Naive thymus-derived CD8-positive, alpha-beta T cell (primary cell): ENCODE measurements at regions of chr3 and their contacts with region 1.

Region 1: DNA sequence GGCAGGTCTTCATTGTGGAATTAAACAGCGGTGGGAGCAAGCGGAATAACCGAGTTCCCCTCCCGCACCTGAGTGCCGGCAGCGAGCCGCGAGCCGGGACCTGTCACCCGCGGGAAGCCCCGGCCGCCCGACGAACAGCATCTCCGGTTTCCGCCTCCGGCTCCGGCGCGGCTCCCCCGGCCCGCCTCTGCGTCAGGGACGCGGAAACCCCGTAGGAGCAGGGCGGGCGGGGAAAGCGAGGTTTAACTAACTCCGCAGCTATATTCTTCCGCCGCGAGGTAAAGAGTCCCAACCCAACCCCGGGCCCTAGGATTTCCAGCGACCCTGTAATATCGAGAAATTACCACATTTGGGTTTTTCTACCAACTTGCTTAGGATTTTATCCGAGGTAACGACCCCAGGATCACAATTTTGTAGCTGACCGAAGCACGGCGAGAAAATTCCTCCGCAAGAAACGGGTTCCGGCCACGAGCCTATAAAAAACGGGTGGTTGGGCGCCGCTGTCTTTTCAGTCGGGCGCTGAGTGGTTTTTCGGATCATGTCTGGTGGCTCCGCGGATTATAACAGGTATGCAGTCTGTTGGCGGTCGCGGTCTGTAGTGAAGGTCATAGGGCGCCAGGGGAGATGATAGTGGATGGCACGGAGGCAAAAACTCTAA is at the start of gene EIF4A2:
- DNase-seq: peak; percentile 84 to 97 (median 88)
- ATAC-seq: peak; percentile 69 to 70
- H3K4me3 Mint-ChIP-seq: peak within 1 kb of the TSS; percentile 98 to 100 (median 99)
- H3K27ac Mint-ChIP-seq: peak within 1 kb of the TSS; percentile 99 to 100 (median 100)
- H3K4me1 Mint-ChIP-seq: peaks cover 27 to 55% (median 52%) of the 10 kb centered on the region in 4 donors
- H3K27me3 Mint-ChIP-seq: no peaks in the 10 kb centered on the region
- polyA plus RNA-seq, gene EIF4A2: 221 to 293 (median 226) TPM

Region 2: GRCh38 chr3:185937689-185938463 is 845.3 kb before region 1 on chr3 and contains the start of gene TRA2B:
- POLR2A ChIA-PET with region 1: interaction called, 52 read pairs
- DNase-seq: peak; percentile 92 to 99 (median 99)
- ATAC-seq: peak; percentile 84 to 88
- H3K4me3 Mint-ChIP-seq: peak within 1 kb of the TSS; percentile 96 to 100 (median 100)
- H3K27ac Mint-ChIP-seq: peak within 1 kb of the TSS; percentile 99 to 100 (median 100)
- H3K4me1 Mint-ChIP-seq: peaks cover 17 to 47% (median 38%) of the 10 kb centered on the region in 4 donors
- H3K27me3 Mint-ChIP-seq: peaks cover 0 to 2% (median 0%) of the 10 kb centered on the region in 5 donors
- polyA plus RNA-seq, gene TRA2B: 176 to 226 (median 184) TPM

Region 3: DNA sequence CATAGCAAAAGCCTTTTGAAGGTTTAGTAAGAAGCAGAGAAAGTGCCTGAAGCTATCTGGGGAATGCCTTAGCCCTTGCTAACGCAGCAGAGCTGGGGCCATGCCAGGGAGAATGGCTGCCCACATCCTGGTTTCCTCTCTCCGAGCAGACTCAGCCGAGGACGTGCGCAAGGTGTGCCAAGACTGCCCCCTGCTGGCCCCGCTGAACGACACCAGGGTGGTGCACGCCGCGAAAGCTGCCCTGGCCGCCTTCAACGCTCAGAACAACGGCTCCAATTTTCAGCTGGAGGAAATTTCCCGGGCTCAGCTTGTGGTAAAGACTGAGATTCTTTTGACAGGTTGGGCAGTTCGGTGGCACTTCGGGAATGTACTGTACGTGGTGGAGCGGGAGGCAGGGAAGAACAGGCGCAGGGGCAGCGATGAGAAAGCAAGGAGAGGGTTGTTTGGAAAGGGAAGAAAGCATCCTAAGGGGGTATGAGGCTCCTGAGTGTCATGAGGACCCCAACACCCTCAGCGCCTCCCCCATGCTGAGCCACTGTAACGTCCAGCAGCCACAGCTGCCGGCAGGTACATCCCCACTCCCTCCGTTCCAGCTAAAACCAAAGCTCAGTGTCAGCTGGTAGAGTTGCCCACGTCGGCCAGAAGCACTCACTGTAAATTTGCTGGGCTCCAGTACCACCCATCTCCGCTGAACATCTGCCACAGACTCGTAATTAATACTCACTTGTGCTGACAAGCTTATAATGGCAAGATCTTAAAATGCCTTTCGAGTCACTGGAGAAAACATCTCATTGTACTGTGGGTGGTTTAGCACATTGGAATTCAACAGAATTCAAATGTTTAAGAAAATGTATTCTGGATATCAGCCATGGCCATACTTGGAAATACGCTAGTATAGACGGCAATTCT is 165.9 kb before region 1 on chr3:
- POLR2A ChIA-PET with region 1: interaction called, 38 read pairs
- DNase-seq: peak; percentile 72 to 90 (median 82)
- ATAC-seq: peak; percentile 98
- H3K4me3 Mint-ChIP-seq: peak overlapping the region; percentile 54 to 79 (median 72)
- H3K27ac Mint-ChIP-seq: peak overlapping the region in 6 of 10 donors; percentile 47 to 87 (median 73)
- H3K4me1 Mint-ChIP-seq: peaks cover 13 to 21% (median 19%) of the 10 kb centered on the region in 4 donors
- H3K27me3 Mint-ChIP-seq: peaks cover 8 to 43% (median 26%) of the 10 kb centered on the region in 5 donors

Region 4: GRCh38 chr3:186732169-186732766 is 50.9 kb before region 1 on chr3:
- POLR2A ChIA-PET with region 1: no interaction called
- DNase-seq: no peak
- ATAC-seq: no peak
- H3K4me3 Mint-ChIP-seq: no peak overlapping the region
- H3K27ac Mint-ChIP-seq: no peak overlapping the region
- H3K4me1 Mint-ChIP-seq: no peaks in the 10 kb centered on the region
- H3K27me3 Mint-ChIP-seq: peaks cover 0 to 2% (median 0%) of the 10 kb centered on the region in 5 donors

Region 5: GRCh38 chr3:186798239-186798874 is 15.2 kb after region 1 on chr3:
- POLR2A ChIA-PET with region 1: interaction called, 97 read pairs
- DNase-seq: no peak
- ATAC-seq: no peak
- H3K4me3 Mint-ChIP-seq: no peak overlapping the region
- H3K27ac Mint-ChIP-seq: peak overlapping the region in 2 of 10 donors; percentile 27 to 50
- H3K4me1 Mint-ChIP-seq: peaks cover 0 to 15% (median 11%) of the 10 kb centered on the region in 4 donors
- H3K27me3 Mint-ChIP-seq: no peaks in the 10 kb centered on the region

Region 6: GRCh38 chr3:186826976-186827731 is 44.0 kb after region 1 on chr3:
- POLR2A ChIA-PET with region 1: interaction called, 38 read pairs
- DNase-seq: peak; percentile 76 to 91 (median 85)
- ATAC-seq: peak; percentile 89 to 92
- H3K4me3 Mint-ChIP-seq: peak overlapping the region; percentile 55 to 85 (median 76)
- H3K27ac Mint-ChIP-seq: peak overlapping the region in 1 of 10 donors; percentile 29
- H3K4me1 Mint-ChIP-seq: peaks cover 8 to 26% (median 21%) of the 10 kb centered on the region in 4 donors
- H3K27me3 Mint-ChIP-seq: peaks cover 36 to 71% (median 50%) of the 10 kb centered on the region in 5 donors

Region 7: GRCh38 chr3:186849374-186849975 is 66.3 kb after region 1 on chr3:
- POLR2A ChIA-PET with region 1: no interaction called
- DNase-seq: peak in 5 of 10 donors; percentile 13 to 77 (median 60)
- ATAC-seq: peak; percentile 99 to 100
- H3K4me3 Mint-ChIP-seq: peak overlapping the region in 1 of 10 donors; percentile 41
- H3K27ac Mint-ChIP-seq: peak overlapping the region in 6 of 10 donors; percentile 51 to 84 (median 71)
- H3K4me1 Mint-ChIP-seq: peaks cover 12 to 29% (median 19%) of the 10 kb centered on the region in 4 donors
- H3K27me3 Mint-ChIP-seq: peaks cover 0 to 6% (median 5%) of the 10 kb centered on the region in 5 donors

Region 8: DNA sequence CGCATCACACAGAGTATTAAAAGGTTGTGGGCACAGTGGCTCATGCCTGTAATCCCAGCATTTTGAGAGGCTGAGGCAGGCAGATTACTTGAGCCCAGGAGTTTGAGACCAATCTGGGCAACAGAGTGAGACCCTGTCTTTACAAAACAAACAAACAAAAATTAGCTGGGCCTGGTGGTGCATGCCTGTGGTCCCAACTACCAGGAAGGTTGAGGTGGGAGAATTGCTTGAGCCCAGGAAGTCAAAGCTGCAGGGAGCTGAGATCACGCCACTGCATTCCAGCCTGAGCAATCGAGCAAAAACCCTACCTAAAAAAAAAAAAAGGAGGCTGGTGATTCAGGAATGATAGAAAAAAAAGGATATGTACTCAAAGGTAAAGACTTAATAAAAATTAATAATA is 119.0 kb after region 1 on chr3:
- POLR2A ChIA-PET with region 1: no interaction called
- DNase-seq: no peak
- ATAC-seq: no peak
- H3K4me3 Mint-ChIP-seq: peak overlapping the region in 1 of 10 donors; percentile 10
- H3K27ac Mint-ChIP-seq: peak overlapping the region in 4 of 10 donors; percentile 48 to 72 (median 57)
- H3K4me1 Mint-ChIP-seq: peaks cover 11 to 39% (median 33%) of the 10 kb centered on the region in 4 donors
- H3K27me3 Mint-ChIP-seq: no peaks in the 10 kb centered on the region

Region 9: DNA sequence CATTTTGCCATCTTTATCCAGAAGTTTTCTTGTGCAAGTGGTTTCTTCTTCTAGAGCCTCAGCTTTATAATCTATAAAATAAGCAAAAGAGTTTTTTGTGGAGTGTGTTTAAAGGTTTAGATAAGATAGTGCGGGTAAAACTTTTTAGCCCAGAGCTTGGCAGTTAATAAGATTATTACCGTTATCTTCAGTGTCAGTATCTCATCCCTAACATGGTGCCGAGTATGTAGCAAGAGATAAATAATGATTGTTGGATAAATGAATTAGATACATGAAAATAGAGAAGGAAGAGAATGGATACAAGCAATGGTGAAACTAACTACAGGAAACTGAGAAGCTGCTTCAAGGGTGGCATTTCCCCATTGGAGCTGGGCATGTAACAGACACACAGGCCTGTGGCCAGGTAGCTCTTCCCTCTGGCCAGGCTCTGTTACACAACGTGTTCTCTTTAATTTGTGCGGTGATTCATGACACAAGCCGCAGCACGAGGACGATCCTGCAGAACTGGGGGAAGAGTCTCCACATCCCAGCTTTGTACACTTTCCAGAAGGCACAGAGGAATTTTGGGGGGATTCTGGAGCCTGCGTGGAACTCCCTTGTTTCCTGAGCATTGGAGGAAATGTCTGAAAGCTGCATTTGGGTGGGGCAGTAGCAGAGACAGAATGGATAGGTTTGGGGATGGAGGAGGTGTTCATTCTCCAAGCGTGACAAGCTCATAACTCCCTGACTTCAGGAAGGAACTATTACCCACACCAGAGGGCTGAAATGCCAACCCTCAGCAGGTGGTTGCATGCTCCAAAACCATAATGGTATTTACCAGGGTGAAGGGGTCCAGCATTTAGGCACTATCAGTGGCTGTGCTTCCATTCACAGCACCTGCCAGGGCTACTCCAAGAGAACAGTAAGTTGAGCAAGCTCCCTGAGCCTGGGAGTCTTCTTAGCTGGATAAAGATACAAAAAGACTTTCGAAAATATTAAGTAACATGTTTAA is 132.9 kb after region 1 on chr3:
- POLR2A ChIA-PET with region 1: interaction called, 19 read pairs
- DNase-seq: peak in 1 of 10 donors; percentile 6
- ATAC-seq: peak; percentile 57 to 59
- H3K4me3 Mint-ChIP-seq: peak overlapping the region in 9 of 10 donors; percentile 9 to 83 (median 58)
- H3K27ac Mint-ChIP-seq: peak overlapping the region; percentile 3 to 71 (median 48)
- H3K4me1 Mint-ChIP-seq: peaks cover 28 to 58% (median 54%) of the 10 kb centered on the region in 4 donors
- H3K27me3 Mint-ChIP-seq: no peaks in the 10 kb centered on the region

Region 10: GRCh38 chr3:187025656-187026316 is 242.6 kb after region 1 on chr3:
- POLR2A ChIA-PET with region 1: interaction called, 20 read pairs
- DNase-seq: peak in 2 of 10 donors; percentile 39 to 43
- ATAC-seq: peak; percentile 10 to 18
- H3K4me3 Mint-ChIP-seq: peak overlapping the region; percentile 85 to 95 (median 90)
- H3K27ac Mint-ChIP-seq: peak overlapping the region; percentile 88 to 99 (median 94)
- H3K4me1 Mint-ChIP-seq: peaks cover 36 to 90% (median 67%) of the 10 kb centered on the region in 4 donors
- H3K27me3 Mint-ChIP-seq: no peaks in the 10 kb centered on the region